ENCODE measurements at regions of chr19 and their contacts with region 1.

Region 1: DNA sequence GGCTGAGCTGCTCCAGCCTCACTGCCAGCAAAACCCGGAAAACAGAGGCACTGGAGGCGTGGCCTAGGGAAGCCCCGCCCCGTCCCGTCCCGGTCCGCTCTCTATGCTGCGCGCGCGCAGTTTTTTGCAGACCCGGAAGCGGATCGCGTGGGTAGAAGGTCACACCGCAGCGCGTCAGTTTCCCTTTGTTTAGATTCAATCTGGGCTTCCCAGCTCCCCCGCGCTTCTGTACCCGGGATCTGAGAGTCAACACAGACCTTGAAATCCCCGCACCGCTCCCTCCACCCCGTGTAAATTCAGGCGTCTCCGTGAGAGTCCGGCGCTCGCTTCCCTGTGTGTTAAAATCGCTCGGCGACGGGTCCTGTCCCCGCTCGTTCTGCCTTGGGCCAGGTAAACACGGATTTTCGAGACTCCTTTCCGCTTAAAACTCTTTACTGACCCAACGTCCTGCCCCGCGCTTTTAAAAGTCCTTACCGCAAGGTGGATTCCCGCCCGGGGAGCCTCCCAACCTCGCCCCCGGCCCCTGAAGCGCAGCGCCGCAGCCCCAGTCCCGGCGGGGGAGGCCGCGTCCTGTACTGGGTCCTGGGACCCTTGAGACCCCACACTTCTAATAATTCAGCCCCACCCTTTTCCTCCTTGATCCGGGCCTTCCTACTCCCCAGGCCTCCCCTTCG is at the start of gene ZNF610:
- DNase-seq: peak; percentile 83
- H3K4me3 ChIP-seq: peak within 1 kb of the TSS; percentile 57 to 79
- H3K27ac ChIP-seq: peak within 1 kb of the TSS; percentile 56 to 80
- H3K4me1 ChIP-seq: no peaks in the 10 kb centered on the region
- H3K27me3 ChIP-seq: no peaks in the 10 kb centered on the region
- CTCF ChIP-seq: no peak
- POLR2A ChIP-seq: peak; percentile 53
- total RNA-seq, gene ZNF610: 5.5 to 9.9 TPM

Region 2: DNA sequence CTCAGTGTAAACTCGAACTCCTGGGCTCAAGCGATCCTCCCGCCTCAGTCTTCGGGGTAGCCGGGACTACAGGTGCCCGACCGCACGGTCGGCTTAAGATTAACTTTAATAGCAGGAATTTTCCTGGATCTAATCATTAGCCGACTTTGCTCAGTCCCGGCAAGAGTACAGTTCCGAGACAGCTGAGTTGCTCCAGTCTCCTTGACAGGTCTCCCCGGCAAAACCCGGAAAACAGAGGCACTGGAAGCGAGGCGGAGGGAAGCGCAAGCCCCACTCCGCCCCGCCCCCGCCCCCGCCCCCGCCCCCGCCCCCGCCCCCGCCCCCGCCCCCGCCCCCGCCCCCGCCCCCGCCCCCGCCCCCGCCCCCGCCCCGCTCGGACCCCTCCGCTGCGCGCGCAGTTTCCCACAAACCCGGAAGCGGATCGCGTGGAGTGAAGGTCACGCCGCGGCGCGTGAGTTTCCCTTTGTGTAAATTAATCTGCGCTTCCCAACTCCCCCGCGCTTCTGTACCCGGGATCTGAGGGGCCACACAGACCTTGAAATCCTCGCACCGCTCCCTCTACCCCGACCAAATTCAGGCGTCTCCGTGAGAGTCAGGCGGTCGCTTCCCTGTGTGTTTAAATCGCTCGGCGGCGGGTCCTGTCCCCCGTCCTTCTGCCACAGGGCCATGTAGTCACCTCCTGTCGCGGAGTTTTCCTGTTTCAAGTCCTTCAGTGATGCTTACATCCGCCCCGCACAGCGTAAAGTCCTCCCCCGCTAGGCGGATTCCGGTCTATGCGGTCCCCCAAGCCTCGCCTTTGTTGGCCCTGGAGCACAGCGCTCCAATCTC is 39.3 kb before region 1 on chr19 and contains the start of gene ZNF480:
- intact Hi-C with region 1: loop called (anchors 5 kb)
- DNase-seq: peak; percentile 75
- H3K4me3 ChIP-seq: peak within 1 kb of the TSS; percentile 88 to 90
- H3K27ac ChIP-seq: peak within 1 kb of the TSS; percentile 85 to 88
- H3K4me1 ChIP-seq: no peaks in the 10 kb centered on the region
- H3K27me3 ChIP-seq: no peaks in the 10 kb centered on the region
- CTCF ChIP-seq: peak in 2 of 4 experiments; percentile 17
- POLR2A ChIP-seq: peak; percentile 17
- total RNA-seq, gene ZNF480: 6.4 to 10.8 TPM

Measured in prostate gland (tissue), 2 donors.